Activated CD4-positive, alpha-beta T cell treated with anti-CD3 and anti-CD28 coated beads, Interleukin-2, amount 10 ng/mL, durations not matched to agents 24 days and 14 days (primary cell): ENCODE measurements at regions of chr4 and their contacts with region 1.

Region 1: DNA sequence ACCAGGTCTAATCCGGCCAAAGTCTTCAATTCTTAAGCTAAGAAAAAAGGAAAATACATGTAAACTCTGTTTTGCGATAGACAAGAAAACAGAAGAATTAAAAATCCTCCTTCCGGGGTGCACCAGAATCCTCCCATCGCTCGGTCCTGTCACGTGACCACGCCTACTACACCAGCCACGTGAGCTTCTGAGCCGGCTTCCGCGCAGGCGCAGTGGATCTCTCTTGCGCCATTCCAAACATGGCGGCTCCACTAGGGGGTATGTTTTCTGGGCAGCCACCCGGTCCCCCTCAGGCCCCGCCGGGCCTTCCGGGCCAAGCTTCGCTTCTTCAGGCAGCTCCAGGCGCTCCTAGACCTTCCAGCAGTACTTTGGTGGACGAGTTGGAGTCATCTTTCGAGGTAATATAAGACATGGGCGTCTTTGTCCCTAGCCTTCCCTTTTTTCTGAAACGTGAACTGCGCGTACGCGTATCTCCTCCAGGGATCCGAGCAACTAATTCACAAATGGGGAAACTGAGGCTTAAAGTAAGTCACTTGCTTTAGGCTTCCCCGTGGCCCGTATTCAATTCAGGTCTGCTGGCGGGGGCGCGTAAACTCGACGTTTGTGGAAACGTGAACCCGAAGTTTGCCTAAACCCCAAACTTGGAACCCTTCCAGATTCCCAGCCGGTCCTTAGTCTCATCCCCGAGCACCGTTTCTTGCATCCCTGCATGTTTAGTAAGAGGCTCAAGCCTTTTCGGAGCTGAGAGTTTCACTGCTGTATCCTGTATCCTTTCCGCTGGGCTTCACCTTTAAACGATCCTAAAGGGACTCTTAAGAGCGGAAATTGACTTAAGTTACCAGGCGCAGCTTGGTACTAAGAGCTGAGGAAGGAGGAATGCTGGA is at the start of gene MED28:
- DNase-seq: peak; percentile 98
- H3K4me3 Mint-ChIP-seq: peak within 1 kb of the TSS; percentile 88
- H3K27ac Mint-ChIP-seq: peak within 1 kb of the TSS; percentile 92
- H3K4me1 Mint-ChIP-seq: peaks cover 30% of the 10 kb centered on the region
- H3K27me3 Mint-ChIP-seq: peaks cover 2% of the 10 kb centered on the region
- total RNA-seq, gene MED28: 54.5 and 55.5 TPM in 2 replicates

Region 2: DNA sequence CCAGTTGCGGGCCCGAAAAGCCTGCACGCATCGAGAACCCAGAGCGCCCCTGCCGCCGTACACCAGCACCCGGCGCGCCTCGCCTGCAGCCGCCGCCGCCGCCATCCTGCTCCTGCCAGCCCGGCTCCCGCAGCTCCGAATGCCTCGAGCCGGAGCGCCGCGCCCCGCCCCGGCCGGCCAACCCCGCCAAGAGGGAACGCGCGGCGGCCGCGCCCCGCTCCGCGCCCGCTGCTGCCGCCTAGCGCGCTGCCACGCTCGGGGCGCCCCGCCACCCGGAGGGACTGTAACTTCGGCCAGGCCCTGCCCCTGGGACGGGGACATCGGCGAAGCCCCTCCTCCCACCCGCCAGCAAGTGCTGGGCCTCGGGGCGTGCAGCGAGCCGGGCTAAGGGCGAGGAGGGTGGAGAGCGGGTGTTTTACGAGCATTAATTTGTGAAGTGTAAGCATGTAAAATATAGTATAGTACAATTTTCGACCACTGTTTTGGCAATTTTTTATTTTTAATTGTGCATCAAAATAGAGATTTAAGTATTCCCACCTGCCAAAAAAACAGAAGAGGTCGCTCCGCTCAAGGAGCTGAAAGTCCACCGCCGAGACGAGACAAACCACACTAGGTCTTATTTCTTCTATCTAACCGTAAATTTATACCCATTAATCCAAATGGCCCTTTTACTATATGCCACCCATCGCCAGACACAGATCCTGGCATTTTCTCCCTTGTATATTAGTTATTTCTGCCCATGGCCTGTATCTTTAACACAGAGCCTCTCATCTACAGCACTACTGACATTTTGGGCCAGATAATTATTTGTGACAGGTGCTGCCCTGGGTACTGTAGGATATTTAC is 102.5 kb before region 1 on chr4 and contains the start of gene QDPR:
- intact Hi-C with region 1: loop called (anchors 5 kb)
- DNase-seq: peak; percentile 92
- H3K4me3 Mint-ChIP-seq: peak within 1 kb of the TSS; percentile 96
- H3K27ac Mint-ChIP-seq: peak within 1 kb of the TSS; percentile 91
- H3K4me1 Mint-ChIP-seq: peaks cover 18% of the 10 kb centered on the region
- H3K27me3 Mint-ChIP-seq: peaks cover 11% of the 10 kb centered on the region
- total RNA-seq, gene QDPR: 31.8 and 34.4 TPM in 2 replicates

Region 3: DNA sequence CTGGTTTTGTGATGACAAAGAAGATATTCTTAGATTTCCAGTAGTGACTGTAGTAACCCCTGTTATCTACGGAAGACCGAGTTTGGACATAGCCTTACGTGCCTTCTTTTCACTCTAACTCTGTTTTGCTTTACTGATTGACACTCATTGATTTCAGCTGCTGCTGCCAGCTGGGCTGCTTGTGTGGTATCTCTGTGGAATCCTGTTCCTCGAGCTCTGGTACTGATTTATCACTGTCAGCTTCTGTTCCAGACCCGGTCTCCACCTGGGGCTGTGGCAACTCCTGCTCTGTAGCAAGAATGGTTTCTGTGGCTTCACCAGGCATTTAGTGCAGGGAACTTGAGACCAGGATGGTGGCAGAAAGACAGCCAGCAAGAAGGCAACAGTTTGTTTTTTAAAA is 62.2 kb before region 1 on chr4:
- intact Hi-C with region 1: no loop called
- DNase-seq: no peak
- H3K4me3 Mint-ChIP-seq: no peak overlapping the region
- H3K27ac Mint-ChIP-seq: no peak overlapping the region
- H3K4me1 Mint-ChIP-seq: peaks cover 8% of the 10 kb centered on the region
- H3K27me3 Mint-ChIP-seq: peaks cover 25% of the 10 kb centered on the region

Region 4: DNA sequence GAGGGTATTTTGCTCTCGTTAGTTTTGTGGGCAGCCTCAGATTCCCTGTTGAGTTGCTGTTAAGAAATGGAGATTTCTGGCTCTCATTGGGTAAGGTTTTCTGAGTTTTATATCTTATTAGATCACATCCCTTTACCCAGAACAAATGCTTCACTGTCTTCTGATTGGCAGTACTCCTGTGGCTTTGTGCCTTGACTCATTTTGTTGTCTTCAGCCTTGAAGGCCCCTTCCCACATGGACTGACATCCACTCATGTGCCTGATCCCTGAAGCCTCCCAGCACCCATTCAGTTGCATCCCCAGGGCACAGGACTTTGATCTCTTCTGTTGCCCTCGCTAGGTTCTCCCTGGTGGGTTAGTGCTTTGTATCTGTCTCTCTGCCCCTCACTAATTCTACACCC is 10.2 kb after region 1 on chr4:
- intact Hi-C with region 1: no loop called
- DNase-seq: no peak
- H3K4me3 Mint-ChIP-seq: no peak overlapping the region
- H3K27ac Mint-ChIP-seq: no peak overlapping the region
- H3K4me1 Mint-ChIP-seq: peaks cover 5% of the 10 kb centered on the region
- H3K27me3 Mint-ChIP-seq: no peaks in the 10 kb centered on the region

Region 5: GRCh38 chr4:17636696-17637622 is 22.3 kb after region 1 on chr4:
- intact Hi-C with region 1: loop called (anchors 1 kb)
- DNase-seq: peak; percentile 91
- H3K4me3 Mint-ChIP-seq: no peak overlapping the region
- H3K27ac Mint-ChIP-seq: no peak overlapping the region
- H3K4me1 Mint-ChIP-seq: no peaks in the 10 kb centered on the region
- H3K27me3 Mint-ChIP-seq: no peaks in the 10 kb centered on the region

Region 6: DNA sequence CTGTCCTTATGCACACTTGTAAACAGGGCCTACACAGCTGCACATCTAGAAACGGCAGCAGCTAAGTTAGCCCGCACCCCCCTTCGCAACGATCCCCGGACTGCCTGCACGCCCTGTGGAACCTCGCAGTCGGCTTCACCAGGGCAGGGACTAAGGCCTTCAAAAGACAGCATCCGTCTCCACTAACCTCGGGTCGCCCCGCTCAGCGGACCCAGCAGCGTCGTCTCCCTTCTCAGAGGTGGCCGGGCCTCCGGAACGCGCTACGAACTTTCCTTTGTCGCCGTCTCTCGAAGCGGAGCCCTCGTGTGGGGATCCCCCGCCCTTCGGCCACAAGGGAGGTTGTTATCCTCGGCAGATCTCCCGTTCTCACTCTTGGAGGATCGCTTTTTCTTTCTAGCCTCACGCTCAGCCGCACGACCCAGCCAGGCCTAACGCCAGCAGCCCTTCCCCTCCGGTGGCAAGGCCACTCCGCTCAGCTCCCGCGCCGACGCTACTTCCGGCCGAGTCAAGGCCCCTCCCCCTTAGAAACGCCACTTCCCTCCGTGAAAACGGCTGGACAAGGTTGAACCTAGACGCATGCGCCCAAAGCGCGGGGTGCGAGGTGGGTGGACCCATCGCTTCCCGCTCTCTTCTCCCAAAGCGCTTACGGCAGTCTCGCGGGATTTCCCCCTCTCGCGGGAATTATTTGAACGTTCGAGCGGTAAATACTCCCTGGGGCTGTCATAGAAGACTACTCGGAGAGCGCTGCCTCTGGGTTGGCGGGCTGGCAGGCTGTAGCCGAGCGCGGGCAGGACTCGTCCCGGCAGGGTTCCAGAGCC is 195.8 kb after region 1 on chr4 and contains the starts of genes DCAF16 and NCAPG:
- intact Hi-C with region 1: loop called (anchors 1 kb)
- DNase-seq: peak; percentile 100
- H3K4me3 Mint-ChIP-seq: peak within 1 kb of the TSS; percentile 97
- H3K27ac Mint-ChIP-seq: peak within 1 kb of the TSS; percentile 99
- H3K4me1 Mint-ChIP-seq: peaks cover 49% of the 10 kb centered on the region
- H3K27me3 Mint-ChIP-seq: peaks cover 2% of the 10 kb centered on the region
- total RNA-seq, gene DCAF16: 47.1 and 51.4 TPM in 2 replicates
- total RNA-seq, gene NCAPG: 46.3 and 53.4 TPM in 2 replicates

Region 7: DNA sequence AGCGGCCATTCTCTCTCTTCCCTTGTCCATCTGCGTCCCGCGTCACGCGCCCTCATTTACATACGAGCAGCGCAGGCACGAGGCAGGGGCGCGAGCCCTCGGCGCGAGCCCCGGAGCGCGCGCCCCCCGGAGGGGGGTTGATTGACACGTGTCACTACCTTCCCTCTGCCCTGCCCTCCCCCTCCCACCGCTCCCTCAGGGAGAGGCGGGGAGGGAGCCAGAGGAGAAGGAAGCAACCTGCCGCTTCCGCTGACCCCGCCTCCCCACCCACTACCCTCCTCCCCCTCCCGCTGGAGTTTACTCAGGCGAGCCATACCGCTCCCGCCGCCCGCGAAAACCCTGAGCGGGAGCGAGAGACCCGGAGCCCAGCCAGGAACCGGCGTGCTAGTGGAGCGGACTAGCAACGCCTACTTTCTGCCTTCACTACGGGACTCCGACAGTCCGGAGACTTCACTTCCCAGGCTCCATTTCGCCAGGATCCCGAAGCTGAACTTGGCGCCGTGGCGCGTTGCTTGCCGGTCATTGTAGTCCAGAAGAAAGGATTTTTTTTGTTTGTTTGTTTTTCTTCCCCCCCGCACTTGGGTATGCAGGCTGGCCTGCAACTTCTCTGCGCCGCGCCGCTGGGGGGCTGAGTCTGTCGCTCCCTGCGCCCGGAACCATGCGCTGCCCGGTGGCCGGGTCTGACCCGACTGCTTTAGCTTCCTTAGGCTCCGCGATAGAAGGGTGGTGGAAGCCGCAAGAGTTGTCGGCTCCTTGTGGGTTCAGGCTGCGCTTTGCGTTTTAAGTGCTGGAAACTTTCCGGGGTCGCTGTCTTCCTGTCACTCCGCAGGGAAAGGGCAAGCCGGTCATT is 407.3 kb after region 1 on chr4 and contains the start of gene LCORL:
- intact Hi-C with region 1: loop called (anchors 1 kb)
- DNase-seq: peak; percentile 96
- H3K4me3 Mint-ChIP-seq: peak within 1 kb of the TSS; percentile 95
- H3K27ac Mint-ChIP-seq: peak within 1 kb of the TSS; percentile 88
- H3K4me1 Mint-ChIP-seq: peaks cover 17% of the 10 kb centered on the region
- H3K27me3 Mint-ChIP-seq: peaks cover 61% of the 10 kb centered on the region
- total RNA-seq, gene LCORL: 8.7 and 9.3 TPM in 2 replicates